Heart left ventricle (tissue), 16 donors: ENCODE measurements at regions of chr22 and their contacts with region 1.

Region 1: DNA sequence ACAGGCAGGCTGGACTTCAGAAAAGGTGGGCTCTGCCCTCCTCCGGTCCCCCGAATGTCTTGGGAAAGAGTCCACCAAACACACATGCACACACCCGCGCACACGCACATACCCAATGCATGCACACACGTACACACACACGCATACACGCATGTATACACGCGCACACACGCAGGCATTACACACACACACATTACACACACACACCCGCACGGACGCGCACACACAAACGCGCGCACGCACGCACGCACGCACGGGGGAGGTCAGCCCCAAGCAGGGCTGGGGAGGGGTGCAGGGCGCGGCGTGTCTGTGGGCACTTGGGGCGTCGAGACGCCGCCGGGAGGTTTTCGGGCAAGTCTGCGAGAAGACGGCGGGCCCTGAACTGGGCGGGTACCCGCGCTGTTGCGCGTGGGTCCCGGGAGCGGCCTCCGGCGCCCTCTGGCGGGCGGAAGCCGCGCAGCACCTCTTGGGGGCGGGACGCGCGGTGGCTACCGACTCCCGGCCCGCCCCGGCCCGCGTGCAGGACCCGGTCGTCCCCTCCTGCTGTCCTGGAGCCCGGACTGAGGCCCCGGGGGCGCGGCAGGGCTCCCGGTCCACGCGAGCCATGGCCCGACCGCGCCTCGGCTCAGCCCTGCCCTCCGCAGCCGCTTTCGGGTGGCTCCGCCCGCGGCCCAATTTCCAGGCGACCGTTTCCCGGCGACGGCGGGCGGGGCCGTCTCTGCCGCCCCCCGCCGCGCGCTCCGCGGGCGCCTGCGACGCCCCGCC is 3.6 kb downstream of the SEPTIN5 start:
- DNase-seq: peak; percentile 71 to 90 (median 83)
- ATAC-seq: peak; percentile 9 to 76 (median 53)
- H3K4me3 ChIP-seq: peak overlapping the region; percentile 61 to 83 (median 66)
- H3K27ac ChIP-seq: peak overlapping the region; percentile 74 to 99 (median 91)
- H3K4me1 ChIP-seq: peaks cover 0 to 86% (median 37%) of the 10 kb centered on the region in 12 donors
- H3K27me3 ChIP-seq: peaks cover 0 to 58% (median 6%) of the 10 kb centered on the region in 9 donors
- CTCF ChIP-seq: peak; percentile 90 to 100 (median 98)
- POLR2A ChIP-seq: peak in 1 of 2 donors; percentile 22

Region 2: DNA sequence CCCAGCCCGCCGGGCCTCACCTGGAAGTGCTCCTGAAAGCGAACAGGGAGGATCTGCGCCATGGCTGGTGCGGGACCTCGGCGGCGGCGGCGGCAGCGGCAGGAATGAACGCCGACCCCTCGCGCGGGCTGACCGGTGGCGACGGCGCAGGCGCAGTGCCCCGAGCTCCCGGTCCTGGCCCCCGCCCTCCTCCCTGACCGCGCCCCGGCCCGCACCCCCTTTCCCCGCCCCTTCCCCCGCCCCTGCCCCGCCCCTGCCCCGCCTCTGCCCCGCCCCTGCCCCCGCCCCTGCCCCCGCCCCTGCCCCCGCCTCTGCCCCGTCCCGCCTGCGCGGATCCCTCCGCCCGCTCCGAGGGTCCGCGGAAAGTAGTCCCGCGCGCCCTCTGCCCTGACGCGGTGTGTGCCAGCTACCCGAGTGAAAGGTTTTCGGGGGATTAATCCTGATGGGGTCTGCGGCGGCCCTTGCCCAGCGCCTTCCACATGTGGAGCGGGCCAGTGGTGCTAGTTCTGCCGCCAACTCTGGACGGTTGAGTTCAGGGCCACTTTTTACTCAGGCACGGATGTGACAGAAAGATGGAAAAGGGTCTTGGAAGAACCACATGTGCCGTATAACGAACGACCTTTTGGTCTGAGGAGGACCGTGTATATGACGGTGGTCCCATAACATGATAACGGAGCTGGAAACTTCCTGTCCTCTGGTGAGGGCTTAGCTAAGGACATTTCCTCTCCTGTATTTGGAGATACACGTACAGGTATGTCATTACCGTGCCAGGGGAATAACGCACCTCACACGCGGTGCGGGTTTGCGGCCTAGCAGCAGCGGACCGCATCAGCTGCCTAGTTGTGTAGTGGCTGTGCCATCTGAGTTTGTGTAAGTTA is 426.1 kb before region 1 on chr22 and contains the start of gene CLTCL1:
- intact Hi-C with region 1: loop called in 1 of 10 experiments (anchors 10 kb)
- DNase-seq: peak; percentile 86 to 93 (median 89)
- ATAC-seq: peak; percentile 65 to 94 (median 88)
- H3K4me3 ChIP-seq: peak within 1 kb of the TSS; percentile 62 to 100 (median 92)
- H3K27ac ChIP-seq: peak within 1 kb of the TSS; percentile 64 to 93 (median 82)
- H3K4me1 ChIP-seq: peaks cover 0 to 49% (median 24%) of the 10 kb centered on the region in 12 donors
- H3K27me3 ChIP-seq: no peaks in the 10 kb centered on the region
- CTCF ChIP-seq: no peak
- POLR2A ChIP-seq: peak in 1 of 2 donors; percentile 70
- total RNA-seq, gene CLTCL1: 7.6 to 20.9 (median 10.4) TPM

Region 3: GRCh38 chr22:19495562-19496323 is 222.1 kb before region 1 on chr22:
- intact Hi-C with region 1: loop called in 1 of 10 experiments (anchors 10 kb)
- DNase-seq: no peak
- ATAC-seq: peak in 1 of 4 donors; percentile 64
- H3K4me3 ChIP-seq: no peak overlapping the region
- H3K27ac ChIP-seq: no peak overlapping the region
- H3K4me1 ChIP-seq: no peaks in the 10 kb centered on the region
- H3K27me3 ChIP-seq: no peaks in the 10 kb centered on the region
- CTCF ChIP-seq: peak in 11 of 12 donors; percentile 5 to 57 (median 37)
- POLR2A ChIP-seq: no peak

Region 4: DNA sequence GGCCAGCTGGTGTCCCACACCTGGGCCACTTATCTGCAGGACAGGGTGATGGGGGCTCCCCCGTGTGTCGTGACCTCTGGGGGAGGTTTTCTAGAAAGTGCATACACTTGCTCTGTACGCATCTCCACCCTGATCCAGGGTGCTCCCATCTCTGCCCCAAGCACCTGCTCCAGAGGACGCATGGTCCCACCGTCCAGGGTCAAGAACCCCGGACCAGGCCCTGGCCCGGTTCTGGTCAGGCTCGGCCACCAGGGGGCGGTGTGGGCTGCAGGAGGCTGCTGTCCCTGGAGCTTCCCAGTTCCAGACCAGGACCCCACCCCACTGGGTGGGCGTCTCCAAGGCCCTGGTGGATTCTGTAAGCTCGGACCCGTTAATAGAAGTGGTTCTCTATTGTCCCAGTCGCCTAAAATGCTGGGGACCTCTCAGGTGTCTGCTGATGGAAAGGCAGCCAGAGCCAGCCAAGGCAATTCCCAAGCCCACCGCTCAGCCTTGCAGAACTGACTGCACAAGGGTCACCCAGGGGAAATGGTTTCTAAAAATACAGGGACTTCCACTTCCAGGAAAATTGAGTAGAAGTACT is 38.3 kb before region 1 on chr22:
- intact Hi-C with region 1: loop called in 8 of 10 experiments (anchors 2 to 5 kb)
- DNase-seq: peak in 4 of 5 donors; percentile 44 to 84 (median 53)
- ATAC-seq: peak in 3 of 4 donors; percentile 71 to 80 (median 74)
- H3K4me3 ChIP-seq: no peak overlapping the region
- H3K27ac ChIP-seq: no peak overlapping the region
- H3K4me1 ChIP-seq: peaks cover 0 to 5% (median 0%) of the 10 kb centered on the region in 12 donors
- H3K27me3 ChIP-seq: peaks cover 0 to 16% (median 3%) of the 10 kb centered on the region in 9 donors
- CTCF ChIP-seq: peak; percentile 67 to 94 (median 84)
- POLR2A ChIP-seq: no peak

Region 5: GRCh38 chr22:19766511-19767426 is 48.9 kb after region 1 on chr22:
- intact Hi-C with region 1: no loop called
- DNase-seq: peak in 2 of 5 donors; percentile 70 to 81
- ATAC-seq: peak in 3 of 4 donors; percentile 38 to 59 (median 48)
- H3K4me3 ChIP-seq: peak overlapping the region in 11 of 12 donors; percentile 22 to 57 (median 40)
- H3K27ac ChIP-seq: peak overlapping the region in 1 of 12 donors; percentile 32
- H3K4me1 ChIP-seq: peaks cover 0 to 32% (median 17%) of the 10 kb centered on the region in 12 donors
- H3K27me3 ChIP-seq: peaks cover 64 to 98% (median 88%) of the 10 kb centered on the region in 9 donors
- CTCF ChIP-seq: peak in 4 of 12 donors; percentile 20 to 25 (median 24)
- POLR2A ChIP-seq: no peak